Psoas muscle (tissue), 8 donors: ENCODE measurements at regions of chr13 and their contacts with region 1.

Region 1: DNA sequence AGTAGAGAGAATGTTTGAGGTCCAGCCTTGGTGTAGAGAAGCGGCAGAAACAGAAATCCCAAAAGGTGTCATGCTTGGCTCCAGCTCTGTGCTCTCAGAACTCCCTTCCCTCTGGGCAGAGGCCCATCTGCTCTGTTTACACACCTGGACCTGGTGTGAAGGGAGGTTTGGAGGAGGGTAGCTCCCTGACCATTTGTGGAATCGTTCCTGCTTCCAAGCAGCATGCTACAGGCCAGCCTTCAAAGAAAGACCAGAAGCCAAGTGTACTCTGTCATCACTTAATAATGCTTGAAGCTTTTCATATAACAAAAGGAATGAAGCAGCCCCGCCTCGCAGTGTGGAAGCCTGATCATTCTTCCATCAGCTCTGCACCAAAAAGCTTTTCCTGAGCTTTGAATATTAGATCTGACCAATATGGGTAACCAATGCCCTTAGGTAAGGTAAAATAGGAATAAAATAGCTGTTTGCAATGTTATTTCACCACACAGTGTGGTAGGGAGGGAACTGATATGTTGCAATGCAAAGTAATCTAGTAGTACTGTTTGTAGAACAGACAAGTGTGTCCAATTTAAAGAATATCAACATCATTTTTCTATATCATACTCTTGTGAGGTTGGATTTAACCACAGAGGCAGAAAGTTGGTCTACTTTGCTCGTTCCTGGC is 63.3 kb downstream of the ZIC5 start:
- DNase-seq: no peak
- ATAC-seq: no peak
- H3K4me3 ChIP-seq: no peak overlapping the region
- H3K27ac ChIP-seq: no peak overlapping the region
- H3K4me1 ChIP-seq: no peaks in the 10 kb centered on the region
- H3K27me3 ChIP-seq: peaks cover 0 to 75% (median 17%) of the 10 kb centered on the region in 3 donors
- CTCF ChIP-seq: no peak

Region 2: GRCh38 chr13:99847318-99847750 is 60.9 kb before region 1 on chr13:
- intact Hi-C with region 1: no loop called
- DNase-seq: no peak
- ATAC-seq: no peak
- H3K4me3 ChIP-seq: no peak overlapping the region
- H3K27ac ChIP-seq: no peak overlapping the region
- H3K4me1 ChIP-seq: no peaks in the 10 kb centered on the region
- H3K27me3 ChIP-seq: no peaks in the 10 kb centered on the region
- CTCF ChIP-seq: no peak

Region 3: GRCh38 chr13:100115693-100116254 is 207.5 kb after region 1 on chr13:
- intact Hi-C with region 1: no loop called
- DNase-seq: no peak
- ATAC-seq: no peak
- H3K4me3 ChIP-seq: no peak overlapping the region
- H3K27ac ChIP-seq: no peak overlapping the region
- H3K4me1 ChIP-seq: no peaks in the 10 kb centered on the region
- H3K27me3 ChIP-seq: no peaks in the 10 kb centered on the region
- CTCF ChIP-seq: no peak

Region 4: GRCh38 chr13:100235311-100235901 is 327.1 kb after region 1 on chr13:
- intact Hi-C with region 1: loop called in 1 of 2 experiments (anchors 5 kb)
- DNase-seq: no peak
- ATAC-seq: peak in 1 of 4 donors; percentile 58
- H3K4me3 ChIP-seq: no peak overlapping the region
- H3K27ac ChIP-seq: no peak overlapping the region
- H3K4me1 ChIP-seq: no peaks in the 10 kb centered on the region
- H3K27me3 ChIP-seq: no peaks in the 10 kb centered on the region
- CTCF ChIP-seq: peak; percentile 55